Heart left ventricle (tissue), 16 donors: ENCODE measurements at regions of chr9 and their contacts with region 1.

Region 1: GRCh38 chr9:109918339-109919163 is 138.6 kb downstream of the PALM2AKAP2 start:
- DNase-seq: no peak
- ATAC-seq: peak in 3 of 4 donors; percentile 43 to 53 (median 52)
- H3K4me3 ChIP-seq: peak overlapping the region in 1 of 12 donors; percentile 12
- H3K27ac ChIP-seq: peak overlapping the region in 9 of 12 donors; percentile 0 to 56 (median 22)
- H3K4me1 ChIP-seq: peaks cover 0 to 61% (median 35%) of the 10 kb centered on the region in 12 donors
- H3K27me3 ChIP-seq: no peaks in the 10 kb centered on the region
- CTCF ChIP-seq: no peak
- POLR2A ChIP-seq: no peak

Region 2: GRCh38 chr9:109640580-109641371 is 277.8 kb before region 1 on chr9:
- intact Hi-C with region 1: no loop called
- DNase-seq: peak; percentile 55 to 78 (median 63)
- ATAC-seq: peak; percentile 41 to 79 (median 68)
- H3K4me3 ChIP-seq: peak overlapping the region; percentile 18 to 73 (median 59)
- H3K27ac ChIP-seq: peak overlapping the region in 6 of 12 donors; percentile 8 to 69 (median 48)
- H3K4me1 ChIP-seq: peaks cover 0 to 22% (median 4%) of the 10 kb centered on the region in 12 donors
- H3K27me3 ChIP-seq: peaks cover 0 to 39% (median 4%) of the 10 kb centered on the region in 9 donors
- CTCF ChIP-seq: no peak
- POLR2A ChIP-seq: no peak

Region 3: GRCh38 chr9:109953813-109954497 is 35.4 kb after region 1 on chr9:
- intact Hi-C with region 1: loop called in 1 of 10 experiments (anchors 5 kb)
- DNase-seq: no peak
- ATAC-seq: no peak
- H3K4me3 ChIP-seq: no peak overlapping the region
- H3K27ac ChIP-seq: no peak overlapping the region
- H3K4me1 ChIP-seq: peaks cover 0 to 25% (median 9%) of the 10 kb centered on the region in 12 donors
- H3K27me3 ChIP-seq: no peaks in the 10 kb centered on the region
- CTCF ChIP-seq: peak in 3 of 12 donors; percentile 11 to 23 (median 17)
- POLR2A ChIP-seq: no peak

Region 4: GRCh38 chr9:109969011-109969410 is 50.5 kb after region 1 on chr9:
- intact Hi-C with region 1: loop called in 3 of 10 experiments (anchors 5 kb)
- DNase-seq: peak in 3 of 5 donors; percentile 37 to 44 (median 43)
- ATAC-seq: peak; percentile 32 to 79 (median 60)
- H3K4me3 ChIP-seq: no peak overlapping the region
- H3K27ac ChIP-seq: peak overlapping the region in 11 of 12 donors; percentile 13 to 88 (median 66)
- H3K4me1 ChIP-seq: peaks cover 0 to 67% (median 39%) of the 10 kb centered on the region in 12 donors
- H3K27me3 ChIP-seq: no peaks in the 10 kb centered on the region
- CTCF ChIP-seq: peak in 8 of 12 donors; percentile 8 to 52 (median 26)
- POLR2A ChIP-seq: no peak

Region 5: GRCh38 chr9:110040788-110041187 is 122.2 kb after region 1 on chr9:
- intact Hi-C with region 1: loop called in 2 of 10 experiments (anchors 5 kb)
- DNase-seq: no peak
- ATAC-seq: peak in 3 of 4 donors; percentile 13 to 45 (median 25)
- H3K4me3 ChIP-seq: no peak overlapping the region
- H3K27ac ChIP-seq: peak overlapping the region; percentile 6 to 77 (median 49)
- H3K4me1 ChIP-seq: peaks cover 6 to 47% (median 34%) of the 10 kb centered on the region in 12 donors
- H3K27me3 ChIP-seq: no peaks in the 10 kb centered on the region
- CTCF ChIP-seq: no peak
- POLR2A ChIP-seq: no peak

Region 6: DNA sequence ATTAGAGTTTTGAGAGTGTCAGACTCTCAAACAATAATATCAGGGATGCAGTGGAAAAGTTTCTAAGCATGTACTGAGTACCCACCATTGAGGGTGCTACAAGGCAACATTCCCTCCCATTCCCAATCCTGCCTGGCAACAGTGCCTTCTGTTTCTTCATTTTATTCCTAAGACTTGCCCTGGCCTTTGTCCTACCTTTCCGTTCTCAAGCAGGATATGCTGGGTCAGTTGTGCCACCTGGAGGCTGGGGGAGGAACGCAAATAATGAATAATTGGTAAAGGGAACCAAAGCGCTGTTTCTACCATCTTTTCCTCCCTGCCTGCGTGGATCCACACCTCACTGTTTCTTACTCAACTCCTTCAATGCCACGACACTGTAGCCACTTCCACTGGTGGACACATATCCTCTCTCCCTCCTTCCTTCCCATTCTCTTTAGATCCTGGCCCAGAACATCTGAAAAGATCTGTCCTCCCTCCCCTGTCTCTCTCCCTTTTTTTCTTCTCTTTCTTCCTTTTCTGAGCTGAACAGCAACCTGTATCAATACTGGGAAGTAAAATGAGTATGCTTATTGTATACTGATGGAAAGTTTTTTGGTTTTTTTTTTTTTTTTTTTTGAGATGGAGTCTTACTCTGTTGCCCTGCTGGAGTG is 139.9 kb after region 1 on chr9:
- intact Hi-C with region 1: loop called in 1 of 10 experiments (anchors 5 kb)
- DNase-seq: peak in 1 of 5 donors; percentile 44
- ATAC-seq: peak; percentile 48 to 68 (median 62)
- H3K4me3 ChIP-seq: no peak overlapping the region
- H3K27ac ChIP-seq: peak overlapping the region in 8 of 12 donors; percentile 0 to 55 (median 9)
- H3K4me1 ChIP-seq: peaks cover 0 to 45% (median 36%) of the 10 kb centered on the region in 12 donors
- H3K27me3 ChIP-seq: no peaks in the 10 kb centered on the region
- CTCF ChIP-seq: peak; percentile 28 to 66 (median 48)
- POLR2A ChIP-seq: no peak